ENCODE measurements at regions of chr12 and their contacts with region 1.

Region 1: GRCh38 chr12:53065975-53066931 is 12.9 kb downstream of the SPRYD3 start:
- DNase-seq: peak; percentile 84 to 93
- H3K4me3 ChIP-seq: no peak overlapping the region
- H3K27ac ChIP-seq: peak overlapping the region; percentile 1 to 81 (median 69)
- H3K4me1 ChIP-seq: peaks cover 34 to 86% (median 60%) of the 10 kb centered on the region in 4 donors
- H3K27me3 ChIP-seq: no peaks in the 10 kb centered on the region
- CTCF ChIP-seq: peak in 6 of 7 experiments; percentile 7 to 92 (median 86)
- EP300 ChIP-seq: no peak
- POLR2A ChIP-seq: no peak

Region 2: GRCh38 chr12:53102883-53103807 is 36.9 kb after region 1 on chr12 and contains the start of gene SOAT2:
- intact Hi-C with region 1: loop called (anchors 5 kb)
- DNase-seq: peak in 1 of 2 donors; percentile 57
- H3K4me3 ChIP-seq: no peak within 1 kb of the TSS
- H3K27ac ChIP-seq: peak within 1 kb of the TSS in 3 of 5 donors; percentile 10 to 42 (median 39)
- H3K4me1 ChIP-seq: peaks cover 12 to 41% (median 21%) of the 10 kb centered on the region in 4 donors
- H3K27me3 ChIP-seq: peaks cover 0 to 2% (median 0%) of the 10 kb centered on the region in 3 donors
- CTCF ChIP-seq: no peak
- EP300 ChIP-seq: no peak
- POLR2A ChIP-seq: no peak
- total RNA-seq, gene SOAT2: 0.92 TPM in 1 of 5 donors, not detected in the others

Region 3: DNA sequence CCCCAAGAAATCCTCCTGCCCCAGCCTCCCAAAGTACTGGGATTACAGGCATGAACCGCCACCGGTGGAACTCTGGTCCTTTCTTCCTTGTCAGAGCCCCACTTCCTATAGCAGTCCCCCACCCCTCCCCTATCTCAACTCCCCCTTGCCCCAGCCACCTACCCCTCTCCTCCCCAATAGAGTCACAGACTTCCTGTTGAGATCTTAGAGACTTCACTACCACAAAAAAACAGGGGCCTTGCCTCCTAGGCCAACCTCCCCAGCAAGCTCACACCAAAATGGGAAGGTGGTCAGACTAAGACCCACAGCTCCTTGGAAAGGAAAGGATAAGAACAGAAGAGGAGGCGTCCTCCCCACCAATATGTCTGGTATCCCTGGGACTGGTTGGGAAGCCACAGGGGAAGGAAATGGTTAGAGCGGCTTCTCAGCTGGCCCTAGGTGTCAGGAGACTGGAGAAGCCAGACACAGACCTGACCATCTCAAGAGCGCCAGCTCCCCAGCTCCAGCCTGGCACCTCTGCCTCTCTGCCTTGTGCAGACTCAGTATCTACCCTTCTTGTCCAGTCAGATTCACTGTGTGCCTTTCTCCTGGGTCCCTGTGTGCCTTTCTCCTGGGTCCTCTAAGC is 132.3 kb after region 1 on chr12:
- intact Hi-C with region 1: loop called (anchors 5 kb)
- DNase-seq: no peak
- H3K4me3 ChIP-seq: no peak overlapping the region
- H3K27ac ChIP-seq: no peak overlapping the region
- H3K4me1 ChIP-seq: peaks cover 0 to 17% (median 13%) of the 10 kb centered on the region in 4 donors
- H3K27me3 ChIP-seq: no peaks in the 10 kb centered on the region
- CTCF ChIP-seq: no peak
- EP300 ChIP-seq: no peak
- POLR2A ChIP-seq: no peak

Measured in stomach (tissue), 19 donors.